ENCODE measurements at regions of chr3 and their contacts with region 1.

Region 1: DNA sequence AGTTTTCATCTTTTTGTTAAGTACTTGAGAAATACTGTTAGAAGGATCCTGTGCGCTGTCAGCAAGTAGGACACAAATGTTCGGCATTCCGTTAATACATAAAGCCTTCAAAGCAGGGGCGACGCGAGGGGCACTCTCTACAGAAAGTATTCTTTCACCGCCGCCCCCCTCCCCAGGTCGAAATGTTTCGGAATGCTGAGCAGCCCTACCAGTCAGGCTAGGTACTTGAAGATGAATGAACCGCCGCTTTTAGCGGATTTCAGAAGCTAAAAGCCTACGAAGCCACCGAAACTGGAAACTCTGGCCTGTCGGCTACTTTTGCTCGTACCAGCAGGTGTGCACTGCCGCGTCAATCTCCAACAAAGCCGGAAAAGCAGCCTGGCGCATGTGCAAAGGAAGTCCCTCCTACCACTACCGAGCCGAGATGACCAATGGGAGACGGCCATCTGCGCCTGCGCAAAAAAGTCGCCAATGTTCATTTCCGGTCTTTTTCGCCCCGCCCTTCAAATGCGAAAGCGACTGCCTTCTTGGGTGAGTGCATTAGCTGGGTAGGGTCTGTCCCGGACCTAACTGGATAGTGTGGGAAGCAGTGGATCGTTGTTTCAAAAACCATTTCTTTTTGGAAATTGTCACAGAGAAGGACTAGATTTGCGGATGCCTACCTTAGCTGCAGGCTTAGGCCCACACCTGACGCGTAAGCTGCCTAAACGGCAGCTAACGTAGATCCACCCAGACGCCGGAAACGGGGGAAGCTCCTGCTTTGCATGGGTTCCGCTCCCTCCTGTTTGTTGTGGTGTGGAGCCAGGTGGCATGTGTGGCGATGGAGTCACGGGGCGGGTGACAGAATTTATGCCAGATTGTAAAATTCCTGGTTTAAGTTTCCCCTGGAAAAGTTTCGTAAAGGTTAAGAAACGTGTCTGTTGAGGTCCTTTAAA is at the start of gene WDR5B:
- DNase-seq: peak; percentile 95
- ATAC-seq: peak; percentile 89
- H3K4me3 Mint-ChIP-seq: peak within 1 kb of the TSS; percentile 98
- H3K27ac Mint-ChIP-seq: peak within 1 kb of the TSS; percentile 100
- H3K4me1 Mint-ChIP-seq: peaks cover 46% of the 10 kb centered on the region
- H3K27me3 Mint-ChIP-seq: no peaks in the 10 kb centered on the region
- CTCF ChIP-seq: no peak
- total RNA-seq, gene WDR5B: 8.0 and 8.1 TPM in 2 replicates

Region 2: GRCh38 chr3:121749276-121750086 is 666.5 kb before region 1 on chr3 and contains the start of gene GOLGB1:
- CTCF ChIA-PET with region 1: no interaction called
- POLR2A ChIA-PET with region 1: no interaction called
- intact Hi-C with region 1: loop called (anchors 10 kb)
- DNase-seq: peak; percentile 81
- ATAC-seq: peak; percentile 93
- H3K4me3 Mint-ChIP-seq: no peak within 1 kb of the TSS
- H3K27ac Mint-ChIP-seq: no peak within 1 kb of the TSS
- H3K4me1 Mint-ChIP-seq: peaks cover 4% of the 10 kb centered on the region
- H3K27me3 Mint-ChIP-seq: no peaks in the 10 kb centered on the region
- CTCF ChIP-seq: no peak
- total RNA-seq, gene GOLGB1: 37.3 and 44.7 TPM in 2 replicates

Region 3: DNA sequence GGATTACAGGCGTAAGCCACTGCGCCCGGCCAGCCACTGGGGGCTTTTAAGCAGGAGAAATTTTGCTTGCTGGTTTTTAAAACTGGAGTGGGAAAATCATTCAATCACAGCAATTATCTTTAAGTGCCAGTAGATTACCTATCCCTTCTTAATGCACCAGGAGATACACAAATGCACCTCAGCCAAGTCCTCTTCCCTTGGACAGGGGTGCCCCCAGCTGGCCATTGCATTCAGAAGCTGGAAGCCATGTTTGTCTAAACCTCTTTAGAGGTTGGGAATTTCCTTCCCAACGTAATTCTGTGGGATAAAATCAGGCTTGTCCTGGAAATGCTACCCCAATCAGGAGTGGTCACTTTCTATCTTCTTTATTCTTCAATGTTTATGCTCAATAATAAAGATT is 59.6 kb before region 1 on chr3:
- CTCF ChIA-PET with region 1: no interaction called
- POLR2A ChIA-PET with region 1: no interaction called
- intact Hi-C with region 1: no loop called
- DNase-seq: no peak
- ATAC-seq: no peak
- H3K4me3 Mint-ChIP-seq: no peak overlapping the region
- H3K27ac Mint-ChIP-seq: no peak overlapping the region
- H3K4me1 Mint-ChIP-seq: no peaks in the 10 kb centered on the region
- H3K27me3 Mint-ChIP-seq: no peaks in the 10 kb centered on the region
- CTCF ChIP-seq: no peak

Region 4: DNA sequence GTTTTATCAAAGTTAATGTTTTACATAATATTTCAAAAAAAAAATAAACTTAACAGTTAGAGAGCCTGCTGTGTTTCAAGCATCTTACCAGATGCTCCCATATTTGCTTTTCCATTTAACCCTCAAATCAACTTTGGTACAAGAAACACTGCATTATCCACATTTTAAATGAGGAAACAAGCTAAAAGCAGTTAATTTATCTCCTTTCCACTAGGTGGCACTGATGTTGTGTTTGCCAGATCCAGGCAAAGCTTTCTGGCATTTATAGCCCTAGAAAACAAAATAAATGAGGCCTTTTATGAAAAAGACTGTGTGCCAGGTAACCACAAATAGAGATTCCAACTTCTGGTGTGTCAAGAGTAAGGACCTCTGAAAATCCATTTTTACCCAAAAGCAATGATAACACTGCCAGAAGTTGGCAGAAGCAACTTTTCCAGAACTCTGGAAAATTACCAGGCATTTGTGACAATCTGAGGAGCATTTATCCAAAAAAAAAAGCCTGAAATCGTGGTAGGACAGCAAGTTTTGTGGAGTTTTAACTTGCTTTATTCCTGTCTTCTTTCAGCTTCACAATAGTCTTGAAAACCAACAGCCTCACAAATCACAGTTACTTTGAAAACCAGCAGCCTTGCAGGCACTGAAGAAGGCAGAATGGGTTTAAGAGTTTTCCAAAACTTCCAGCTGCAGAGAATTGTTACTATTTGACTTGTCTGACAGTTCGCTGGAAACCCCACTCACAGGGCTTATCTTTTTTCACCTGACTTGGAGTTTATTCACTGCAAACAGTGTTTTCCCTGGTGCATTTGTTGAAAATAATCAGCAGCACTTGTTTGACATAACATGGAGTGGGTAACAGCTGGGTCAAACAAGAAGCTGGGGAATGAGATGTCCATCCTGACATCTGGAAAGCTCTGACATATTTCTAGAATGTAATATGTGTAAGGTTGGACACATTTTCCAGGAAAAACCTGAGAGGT is 22.8 kb before region 1 on chr3:
- CTCF ChIA-PET with region 1: interaction called, 8 read pairs
- POLR2A ChIA-PET with region 1: interaction called, 4 read pairs
- intact Hi-C with region 1: loop called (anchors 2 kb)
- DNase-seq: no peak
- ATAC-seq: no peak
- H3K4me3 Mint-ChIP-seq: no peak overlapping the region
- H3K27ac Mint-ChIP-seq: no peak overlapping the region
- H3K4me1 Mint-ChIP-seq: peaks cover 15% of the 10 kb centered on the region
- H3K27me3 Mint-ChIP-seq: no peaks in the 10 kb centered on the region
- CTCF ChIP-seq: peak; percentile 87

Region 5: DNA sequence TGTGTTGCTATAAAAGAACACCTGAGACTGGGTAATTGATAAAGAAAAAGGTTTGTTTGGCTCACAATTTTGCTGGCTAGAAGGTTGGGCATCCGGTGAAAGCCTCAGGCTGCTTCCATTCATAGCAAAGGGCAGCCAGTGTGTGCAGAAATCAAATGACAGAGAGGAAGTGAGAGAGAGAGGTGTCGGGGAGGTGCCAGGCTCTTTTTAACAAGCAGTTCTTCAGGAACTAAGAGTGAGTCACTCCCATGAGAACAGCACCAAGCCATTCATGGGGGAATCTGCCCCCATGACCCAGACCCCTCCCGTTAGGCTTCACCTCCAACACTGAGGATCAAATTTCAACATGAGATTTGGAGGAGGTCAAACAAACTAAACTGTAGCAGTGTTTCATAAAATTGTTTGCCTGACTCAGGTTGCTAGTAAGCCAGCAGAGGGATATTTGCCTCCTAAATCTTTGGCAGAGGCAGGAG is 157.0 kb after region 1 on chr3:
- CTCF ChIA-PET with region 1: no interaction called
- POLR2A ChIA-PET with region 1: interaction called, 8 read pairs
- intact Hi-C with region 1: loop called (anchors 5 kb)
- DNase-seq: no peak
- ATAC-seq: peak; percentile 22
- H3K4me3 Mint-ChIP-seq: peak overlapping the region; percentile 57
- H3K27ac Mint-ChIP-seq: peak overlapping the region; percentile 93
- H3K4me1 Mint-ChIP-seq: peaks cover 80% of the 10 kb centered on the region
- H3K27me3 Mint-ChIP-seq: no peaks in the 10 kb centered on the region
- CTCF ChIP-seq: no peak

Region 6: GRCh38 chr3:122793568-122794416 is 377.8 kb after region 1 on chr3 and contains the start of gene HSPBAP1:
- CTCF ChIA-PET with region 1: no interaction called
- POLR2A ChIA-PET with region 1: interaction called, 11 read pairs
- intact Hi-C with region 1: loop called (anchors 2 kb)
- DNase-seq: peak; percentile 91
- ATAC-seq: peak; percentile 67
- H3K4me3 Mint-ChIP-seq: no peak within 1 kb of the TSS
- H3K27ac Mint-ChIP-seq: peak within 1 kb of the TSS; percentile 86
- H3K4me1 Mint-ChIP-seq: peaks cover 30% of the 10 kb centered on the region
- H3K27me3 Mint-ChIP-seq: no peaks in the 10 kb centered on the region
- CTCF ChIP-seq: no peak
- total RNA-seq, gene HSPBAP1: 18.1 and 20.6 TPM in 2 replicates

Region 7: DNA sequence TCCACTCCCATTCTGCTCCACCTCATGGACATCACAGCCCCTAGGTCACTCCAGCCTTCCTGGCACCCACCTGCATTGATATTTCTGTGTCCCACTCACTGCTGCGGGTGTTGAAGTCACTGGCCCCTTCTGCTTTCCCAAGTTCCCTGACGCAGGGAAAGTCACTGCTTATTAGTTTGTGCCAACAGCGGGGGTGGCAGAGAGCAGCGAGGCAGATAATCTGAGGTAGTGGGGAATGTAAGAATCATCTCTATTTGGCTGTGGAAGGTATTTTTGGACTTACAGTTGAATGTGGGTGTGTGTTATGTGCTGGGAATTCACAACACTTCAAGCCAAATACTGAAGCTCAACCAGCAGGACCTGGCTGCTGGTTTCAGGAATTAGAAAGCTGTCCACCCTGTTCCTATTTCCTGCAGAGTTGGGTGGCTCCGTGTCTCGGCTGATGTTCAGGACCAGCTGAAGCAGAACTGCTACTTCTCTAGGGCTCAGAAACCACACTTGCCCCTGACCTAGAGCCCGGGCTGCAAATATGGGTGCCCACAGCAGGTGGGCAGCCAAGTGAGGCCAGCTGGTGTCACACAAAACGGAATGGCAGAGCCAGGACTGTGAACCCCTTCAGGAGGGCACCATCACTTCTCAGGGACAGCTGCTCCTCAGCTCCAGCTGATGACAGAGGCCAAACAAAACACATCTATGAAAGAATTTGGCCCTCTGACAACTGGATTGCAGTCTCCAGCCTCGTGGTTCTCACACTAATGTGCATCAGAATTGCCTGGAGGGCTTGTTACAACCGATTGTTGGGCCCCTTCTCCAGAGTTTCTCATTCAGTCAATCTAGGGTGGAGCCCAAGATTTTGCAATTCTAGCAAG is 553.8 kb after region 1 on chr3:
- CTCF ChIA-PET with region 1: no interaction called
- POLR2A ChIA-PET with region 1: no interaction called
- intact Hi-C with region 1: no loop called
- DNase-seq: no peak
- ATAC-seq: no peak
- H3K4me3 Mint-ChIP-seq: no peak overlapping the region
- H3K27ac Mint-ChIP-seq: no peak overlapping the region
- H3K4me1 Mint-ChIP-seq: peaks cover 4% of the 10 kb centered on the region
- H3K27me3 Mint-ChIP-seq: no peaks in the 10 kb centered on the region
- CTCF ChIP-seq: no peak

Measured in activated B cell treated with CpG ODN at 0.5 μM for 24 hours (primary cell).